Vagina (tissue), 2 donors: ENCODE measurements at regions of chr17 and their contacts with region 1.

Region 1: DNA sequence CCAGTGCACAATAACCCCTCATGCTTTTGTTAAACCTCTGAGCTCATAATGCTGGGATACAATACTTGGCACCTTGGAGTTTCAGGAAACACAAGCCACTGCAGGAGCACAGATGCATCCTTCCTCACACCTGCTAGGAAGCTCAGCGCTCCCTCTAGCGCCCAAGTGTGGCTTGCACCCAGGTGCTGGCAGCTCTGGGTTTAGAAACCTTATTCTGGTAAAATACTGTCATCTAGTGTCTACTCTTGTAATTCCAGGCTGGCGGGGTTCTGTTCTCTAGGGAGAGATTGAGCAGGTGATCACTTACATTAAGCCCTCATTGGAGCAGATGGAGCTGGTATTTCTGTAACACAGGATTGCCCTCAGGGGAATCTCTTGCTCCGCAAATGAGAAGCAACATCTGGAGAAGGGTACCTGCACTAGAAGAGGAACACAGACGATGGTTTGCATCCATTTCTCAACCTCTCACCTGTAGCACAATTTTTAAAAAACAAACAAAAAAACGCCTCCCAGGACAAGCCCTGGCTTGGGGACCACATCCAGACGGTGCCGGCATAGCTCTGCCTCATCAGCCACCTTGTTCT is 1.5 kb downstream of the CCL1 start:
- DNase-seq: peak in 1 of 2 donors; percentile 91
- H3K4me3 ChIP-seq: no peak overlapping the region
- H3K27ac ChIP-seq: no peak overlapping the region
- H3K4me1 ChIP-seq: no peaks in the 10 kb centered on the region
- H3K27me3 ChIP-seq: no peaks in the 10 kb centered on the region
- CTCF ChIP-seq: peak; percentile 99 to 100 (median 100)
- POLR2A ChIP-seq: no peak

Region 2: DNA sequence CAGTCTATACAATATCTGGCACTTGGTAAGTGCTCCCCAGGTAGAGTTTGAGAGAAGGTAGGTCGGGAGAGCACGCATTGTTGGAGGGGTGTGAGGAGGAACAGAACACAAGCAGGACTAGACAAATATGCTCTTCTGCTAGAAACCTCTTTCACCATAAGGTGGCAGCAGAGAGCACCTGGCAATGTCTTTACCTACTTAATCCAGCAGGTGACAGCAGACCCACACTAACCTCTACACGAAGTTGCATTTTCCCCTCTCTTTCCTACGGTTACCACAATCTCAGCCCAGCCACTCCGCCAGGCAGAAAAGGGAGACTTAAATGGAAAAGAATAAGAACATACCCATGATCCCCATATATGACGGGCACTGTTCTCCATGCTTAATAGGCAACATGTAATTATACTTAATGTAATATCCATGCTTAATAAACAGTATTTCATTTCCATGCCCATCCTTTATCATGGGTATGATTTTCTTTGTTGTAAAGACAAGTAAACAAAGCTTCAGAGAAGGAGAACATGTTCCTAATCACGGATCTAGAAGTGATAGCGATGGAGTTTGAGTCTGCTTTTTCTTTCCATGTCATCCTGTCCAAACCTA is 161.5 kb before region 1 on chr17:
- intact Hi-C with region 1: loop called (anchors 5 kb)
- DNase-seq: no peak
- H3K4me3 ChIP-seq: no peak overlapping the region
- H3K27ac ChIP-seq: no peak overlapping the region
- H3K4me1 ChIP-seq: peaks cover 6% of the 10 kb centered on the region
- H3K27me3 ChIP-seq: no peaks in the 10 kb centered on the region
- CTCF ChIP-seq: peak; percentile 99 to 100 (median 100)
- POLR2A ChIP-seq: no peak